HEK293 (cell line): ENCODE measurements at regions of chr9 and their contacts with region 1.

Region 1: GRCh38 chr9:114662081-114662989 is 4.7 kb upstream of the TEX53 start:
- H3K4me3 ChIP-seq: no peak overlapping the region
- H3K27ac ChIP-seq: no peak overlapping the region
- H3K4me1 ChIP-seq: no peaks in the 10 kb centered on the region
- CTCF ChIP-seq: 0 out of 2 replicates have a peak, but pooled peaks have one; percentile 23

Region 2: GRCh38 chr9:114551883-114552685 is 110.3 kb before region 1 on chr9:
- CTCF ChIA-PET with region 1: no interaction called
- POLR2A ChIA-PET with region 1: no interaction called
- H3K4me3 ChIP-seq: no peak overlapping the region
- H3K27ac ChIP-seq: no peak overlapping the region
- H3K4me1 ChIP-seq: no peaks in the 10 kb centered on the region
- CTCF ChIP-seq: no peak

Region 3: GRCh38 chr9:114641967-114642366 is 20.4 kb before region 1 on chr9:
- CTCF ChIA-PET with region 1: no interaction called
- POLR2A ChIA-PET with region 1: no interaction called
- H3K4me3 ChIP-seq: no peak overlapping the region
- H3K27ac ChIP-seq: no peak overlapping the region
- H3K4me1 ChIP-seq: no peaks in the 10 kb centered on the region
- CTCF ChIP-seq: no peak

Region 4: DNA sequence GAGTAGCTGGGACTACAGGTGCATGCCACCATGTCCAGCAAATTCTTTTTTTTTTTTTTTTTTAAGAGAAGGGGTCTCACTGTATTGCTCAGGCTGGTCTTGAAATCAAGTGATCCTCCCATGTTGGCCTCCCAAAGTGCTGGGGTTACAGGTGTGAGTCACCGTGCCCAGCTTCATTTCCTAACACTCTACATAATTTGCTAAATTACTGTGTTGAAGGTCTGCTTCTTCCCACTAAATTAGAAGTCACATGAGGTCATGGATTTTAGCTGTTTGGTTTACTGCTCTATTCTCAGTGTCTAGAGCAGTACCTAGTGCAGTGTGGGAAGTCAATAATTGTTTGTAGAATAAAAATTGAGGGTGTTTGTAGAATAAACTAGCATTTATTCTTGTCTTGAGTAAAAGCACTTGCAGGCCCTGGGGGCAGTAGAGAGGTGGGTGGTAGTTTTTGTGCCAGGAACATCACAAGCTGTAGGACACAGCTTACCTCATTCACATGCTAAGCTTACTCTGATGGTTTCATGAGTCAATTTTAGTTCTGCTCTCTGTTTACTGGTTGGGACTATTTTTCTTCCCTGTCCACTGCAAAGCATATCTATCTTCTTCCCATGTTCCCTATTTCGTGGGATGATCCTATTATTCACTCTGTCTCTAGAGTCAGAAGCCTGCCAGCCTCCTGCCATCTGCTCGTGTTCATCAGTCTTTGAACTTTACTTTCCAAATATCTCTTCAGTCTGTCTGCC is 12.6 kb after region 1 on chr9:
- CTCF ChIA-PET with region 1: interaction called, 76 read pairs
- POLR2A ChIA-PET with region 1: no interaction called
- H3K4me3 ChIP-seq: no peak overlapping the region
- H3K27ac ChIP-seq: no peak overlapping the region
- H3K4me1 ChIP-seq: peaks cover 3% of the 10 kb centered on the region
- CTCF ChIP-seq: no peak

Region 5: DNA sequence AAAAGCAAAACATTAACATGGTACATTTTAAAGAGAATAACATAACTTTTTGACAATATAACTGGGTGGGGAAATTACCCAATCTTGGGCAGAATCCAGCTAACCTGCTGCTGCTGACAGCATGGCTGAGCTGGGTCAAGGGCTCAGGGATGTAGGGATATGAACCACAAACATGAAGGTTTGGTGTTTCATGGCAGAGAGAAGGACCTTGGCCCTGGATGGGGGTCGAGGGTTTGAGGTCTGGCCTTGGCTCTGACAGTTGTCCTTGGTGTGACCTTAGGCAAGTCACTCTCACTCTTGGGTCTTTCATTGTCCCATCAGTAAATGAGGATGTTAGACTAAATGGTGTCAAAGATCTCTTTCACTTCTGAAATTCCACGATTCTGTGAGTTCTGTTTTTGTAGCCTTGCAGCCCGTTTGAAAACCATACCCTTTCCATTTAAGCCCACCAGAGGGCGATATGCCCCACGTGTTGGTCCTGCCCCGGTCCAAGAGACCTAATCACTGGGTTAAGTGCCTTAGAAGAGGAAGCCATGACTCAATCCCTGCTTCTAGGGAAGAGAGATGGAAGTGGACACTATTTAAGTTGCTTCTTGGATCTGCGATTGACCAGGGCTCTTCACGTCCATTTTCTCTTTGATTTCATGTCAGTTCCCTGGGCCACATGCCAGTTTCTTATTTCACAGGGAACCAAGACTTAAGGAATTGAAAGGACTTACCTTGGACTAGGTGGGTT is 76.4 kb after region 1 on chr9:
- CTCF ChIA-PET with region 1: interaction called, 19 read pairs
- POLR2A ChIA-PET with region 1: no interaction called
- H3K4me3 ChIP-seq: no peak overlapping the region
- H3K27ac ChIP-seq: no peak overlapping the region
- H3K4me1 ChIP-seq: no peaks in the 10 kb centered on the region; the same call in 1 of the 2 replicates
- CTCF ChIP-seq: peak; percentile 40; the same call in 1 of the 2 replicates

Region 6: GRCh38 chr9:115008536-115009270 is 346.4 kb after region 1 on chr9:
- CTCF ChIA-PET with region 1: interaction called, 20 read pairs
- POLR2A ChIA-PET with region 1: no interaction called
- H3K4me3 ChIP-seq: no peak overlapping the region
- H3K27ac ChIP-seq: no peak overlapping the region
- H3K4me1 ChIP-seq: peaks cover 3% of the 10 kb centered on the region
- CTCF ChIP-seq: no peak